CD4-positive, alpha-beta T cell (primary cell): ENCODE measurements at regions of chr19 and their contacts with region 1.

Region 1: GRCh38 chr19:41641879-41642485 is 15.1 kb upstream of the CEACAM4 start:
- DNase-seq: peak; percentile 49 to 87 (median 68)
- ATAC-seq: peak; percentile 54
- H3K4me3 ChIP-seq: no peak overlapping the region
- H3K4me3 Mint-ChIP-seq: no peak overlapping the region
- H3K27ac ChIP-seq: no peak overlapping the region
- H3K27ac Mint-ChIP-seq: no peak overlapping the region
- H3K4me1 ChIP-seq: peaks cover 38% of the 10 kb centered on the region
- H3K4me1 Mint-ChIP-seq: peaks cover 37% of the 10 kb centered on the region
- H3K27me3 ChIP-seq: peaks cover 0 to 9% of the 10 kb centered on the region in 2 experiments
- H3K27me3 Mint-ChIP-seq: peaks cover 14% of the 10 kb centered on the region
- CTCF ChIP-seq: peak; percentile 97

Region 2: GRCh38 chr19:41480336-41480735 is 161.6 kb before region 1 on chr19:
- CTCF ChIA-PET with region 1: no interaction called
- POLR2A ChIA-PET with region 1: no interaction called
- intact Hi-C with region 1: no loop called
- DNase-seq: no peak
- ATAC-seq: no peak
- H3K4me3 ChIP-seq: no peak overlapping the region
- H3K4me3 Mint-ChIP-seq: no peak overlapping the region
- H3K27ac ChIP-seq: no peak overlapping the region
- H3K27ac Mint-ChIP-seq: no peak overlapping the region
- H3K4me1 ChIP-seq: no peaks in the 10 kb centered on the region
- H3K4me1 Mint-ChIP-seq: no peaks in the 10 kb centered on the region
- H3K27me3 ChIP-seq: peaks cover 10 to 30% of the 10 kb centered on the region in 2 experiments
- H3K27me3 Mint-ChIP-seq: peaks cover 73% of the 10 kb centered on the region
- CTCF ChIP-seq: no peak

Region 3: DNA sequence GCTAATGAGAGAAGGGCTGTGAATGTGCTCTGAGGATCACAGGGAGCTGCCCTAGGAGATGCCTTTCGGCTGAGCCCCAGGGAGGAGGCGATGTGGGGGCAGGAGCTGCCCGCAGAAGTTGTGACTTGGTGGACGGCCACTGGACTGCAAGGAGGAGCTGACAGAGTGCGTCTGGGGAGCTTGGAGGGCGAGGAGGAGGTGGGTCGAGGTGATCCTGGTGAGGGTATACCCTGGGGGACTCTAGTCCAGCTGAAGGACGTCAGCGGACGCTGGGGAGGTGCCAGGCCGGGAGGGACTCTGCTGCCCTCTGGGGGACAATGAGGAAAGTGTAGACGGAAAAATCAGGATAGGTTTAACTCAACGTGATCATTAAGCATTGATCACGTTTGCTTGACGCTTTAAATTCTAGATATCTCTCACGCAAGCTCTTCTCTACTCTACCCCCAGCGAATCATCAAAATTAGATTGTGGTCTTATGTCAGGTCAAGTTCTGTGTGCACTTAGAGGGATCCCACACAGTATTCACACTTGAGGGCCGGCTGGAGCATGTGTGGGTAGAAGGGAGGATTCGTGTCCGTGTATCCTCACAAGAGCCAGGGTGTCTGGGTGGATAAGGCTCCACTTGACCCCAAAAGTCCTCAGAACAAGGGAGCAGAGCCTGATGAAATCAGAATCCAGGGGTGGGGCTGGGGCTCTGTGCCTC is 49.4 kb after region 1 on chr19:
- CTCF ChIA-PET with region 1: interaction called, 8 read pairs
- POLR2A ChIA-PET with region 1: interaction called, 3 read pairs
- intact Hi-C with region 1: loop called (anchors 5 kb)
- DNase-seq: peak in 7 of 14 experiments; percentile 8 to 61 (median 16)
- ATAC-seq: no peak
- H3K4me3 ChIP-seq: no peak overlapping the region
- H3K4me3 Mint-ChIP-seq: no peak overlapping the region
- H3K27ac ChIP-seq: no peak overlapping the region
- H3K27ac Mint-ChIP-seq: no peak overlapping the region
- H3K4me1 ChIP-seq: no peaks in the 10 kb centered on the region
- H3K4me1 Mint-ChIP-seq: no peaks in the 10 kb centered on the region
- H3K27me3 ChIP-seq: peaks cover 10 to 29% of the 10 kb centered on the region in 2 experiments
- H3K27me3 Mint-ChIP-seq: peaks cover 57% of the 10 kb centered on the region
- CTCF ChIP-seq: peak; percentile 59